ENCODE measurements at regions of chr10 and their contacts with region 1.

Region 1: GRCh38 chr10:69092959-69093850 is 5.3 kb downstream of the SRGN start:
- DNase-seq: peak; percentile 87 to 92 (median 88)
- H3K4me3 ChIP-seq: no peak overlapping the region
- H3K4me3 Mint-ChIP-seq: peak overlapping the region; percentile 18 to 76 (median 52)
- H3K27ac ChIP-seq: peak overlapping the region; percentile 64
- H3K27ac Mint-ChIP-seq: peak overlapping the region; percentile 87 to 98 (median 93)
- H3K4me1 ChIP-seq: peaks cover 56% of the 10 kb centered on the region
- H3K4me1 Mint-ChIP-seq: peaks cover 38 to 69% (median 51%) of the 10 kb centered on the region in 4 donors
- H3K27me3 ChIP-seq: no peaks in the 10 kb centered on the region
- H3K27me3 Mint-ChIP-seq: peaks cover 0 to 1% of the 10 kb centered on the region in 2 donors

Region 2: GRCh38 chr10:68955832-68956532 is 137.2 kb before region 1 on chr10 and contains the start of gene DDX21:
- CTCF ChIA-PET with region 1: interaction called, 53 read pairs
- POLR2A ChIA-PET with region 1: interaction called, 21 read pairs
- intact Hi-C with region 1: loop called (anchors 1 kb)
- DNase-seq: peak; percentile 87 to 96 (median 90)
- H3K4me3 ChIP-seq: peak within 1 kb of the TSS; percentile 64 to 97
- H3K4me3 Mint-ChIP-seq: peak within 1 kb of the TSS; percentile 97 to 100 (median 100)
- H3K27ac ChIP-seq: peak within 1 kb of the TSS; percentile 100
- H3K27ac Mint-ChIP-seq: peak within 1 kb of the TSS; percentile 98 to 100 (median 100)
- H3K4me1 ChIP-seq: peaks cover 46% of the 10 kb centered on the region
- H3K4me1 Mint-ChIP-seq: peaks cover 16 to 47% (median 35%) of the 10 kb centered on the region in 4 donors
- H3K27me3 ChIP-seq: no peaks in the 10 kb centered on the region
- H3K27me3 Mint-ChIP-seq: no peaks in the 10 kb centered on the region
- total RNA-seq, gene DDX21: 50.6 to 57.1 TPM

Region 3: GRCh38 chr10:68988530-68989316 is 104.5 kb before region 1 on chr10 and contains the start of gene KIFBP:
- CTCF ChIA-PET with region 1: interaction called, 27 read pairs
- POLR2A ChIA-PET with region 1: interaction called, 16 read pairs
- intact Hi-C with region 1: loop called (anchors 1 kb)
- DNase-seq: peak; percentile 82 to 90 (median 84)
- H3K4me3 ChIP-seq: peak within 1 kb of the TSS; percentile 79 to 99
- H3K4me3 Mint-ChIP-seq: peak within 1 kb of the TSS; percentile 92 to 100 (median 99)
- H3K27ac ChIP-seq: peak within 1 kb of the TSS; percentile 71
- H3K27ac Mint-ChIP-seq: peak within 1 kb of the TSS; percentile 86 to 99 (median 98)
- H3K4me1 ChIP-seq: peaks cover 49% of the 10 kb centered on the region
- H3K4me1 Mint-ChIP-seq: peaks cover 36 to 63% (median 53%) of the 10 kb centered on the region in 4 donors
- H3K27me3 ChIP-seq: no peaks in the 10 kb centered on the region
- H3K27me3 Mint-ChIP-seq: no peaks in the 10 kb centered on the region
- total RNA-seq, gene KIFBP: 17.9 to 18.5 TPM

Region 4: DNA sequence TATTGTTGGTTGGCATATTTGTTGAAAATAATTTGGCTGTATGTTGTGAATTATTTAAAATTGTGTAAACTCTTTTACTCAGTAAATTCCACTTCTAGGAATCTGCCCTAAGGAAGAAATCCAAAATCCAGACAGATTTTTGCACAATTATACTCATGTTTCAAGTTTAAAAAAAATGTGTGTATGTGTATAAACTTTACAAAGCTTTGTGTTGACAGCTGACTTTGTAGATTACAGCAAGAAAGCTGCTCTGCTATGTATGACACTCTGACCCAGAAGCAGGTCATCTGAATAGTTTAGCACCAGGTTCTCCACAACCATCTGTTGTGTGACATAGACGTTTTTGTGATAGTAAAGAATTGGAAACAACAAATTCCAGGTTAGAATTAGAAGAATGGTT is 83.0 kb before region 1 on chr10:
- CTCF ChIA-PET with region 1: interaction called, 228 read pairs
- POLR2A ChIA-PET with region 1: interaction called, 56 read pairs
- intact Hi-C with region 1: loop called (anchors 1 kb)
- DNase-seq: no peak
- H3K4me3 ChIP-seq: no peak overlapping the region
- H3K4me3 Mint-ChIP-seq: no peak overlapping the region
- H3K27ac ChIP-seq: no peak overlapping the region
- H3K27ac Mint-ChIP-seq: no peak overlapping the region
- H3K4me1 ChIP-seq: no peaks in the 10 kb centered on the region
- H3K4me1 Mint-ChIP-seq: peaks cover 0 to 1% (median 0%) of the 10 kb centered on the region in 4 donors
- H3K27me3 ChIP-seq: no peaks in the 10 kb centered on the region
- H3K27me3 Mint-ChIP-seq: no peaks in the 10 kb centered on the region

Region 5: GRCh38 chr10:69061305-69062161 is 31.7 kb before region 1 on chr10:
- CTCF ChIA-PET with region 1: interaction called, 11 read pairs
- POLR2A ChIA-PET with region 1: interaction called, 24 read pairs
- intact Hi-C with region 1: loop called (anchors 2 kb)
- DNase-seq: peak in 4 of 5 donors; percentile 39 to 48 (median 44)
- H3K4me3 ChIP-seq: peak overlapping the region; percentile 12 to 21
- H3K4me3 Mint-ChIP-seq: peak overlapping the region; percentile 79 to 93 (median 85)
- H3K27ac ChIP-seq: peak overlapping the region; percentile 18
- H3K27ac Mint-ChIP-seq: peak overlapping the region; percentile 85 to 94 (median 87)
- H3K4me1 ChIP-seq: peaks cover 36% of the 10 kb centered on the region
- H3K4me1 Mint-ChIP-seq: peaks cover 27 to 47% (median 34%) of the 10 kb centered on the region in 4 donors
- H3K27me3 ChIP-seq: no peaks in the 10 kb centered on the region
- H3K27me3 Mint-ChIP-seq: no peaks in the 10 kb centered on the region

Region 6: DNA sequence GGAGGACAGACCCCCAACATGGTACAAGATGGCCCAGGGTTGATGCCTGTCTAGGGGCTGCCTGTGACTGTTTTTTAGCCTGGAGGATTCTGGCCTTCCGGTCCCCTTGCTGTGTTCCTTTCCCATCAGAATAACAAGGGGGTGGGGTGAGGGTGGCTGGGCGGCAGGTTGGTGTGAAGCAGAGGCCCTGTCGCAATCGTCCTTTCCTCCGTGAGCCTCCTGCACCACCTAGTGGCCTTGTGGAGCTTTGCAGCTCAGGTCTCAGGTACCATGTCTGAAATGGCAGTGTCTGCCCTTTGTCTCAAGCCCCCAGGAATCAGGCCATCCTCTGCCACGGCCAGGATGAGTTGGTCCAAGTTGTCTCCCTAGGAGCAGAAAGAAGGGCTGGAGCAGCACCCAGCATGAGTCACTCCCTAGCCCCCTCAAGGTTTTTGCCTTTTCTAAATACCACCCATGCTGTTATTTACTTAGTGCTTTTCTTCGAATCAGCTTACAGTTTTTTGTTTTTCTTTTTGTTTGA is 299.3 kb after region 1 on chr10:
- CTCF ChIA-PET with region 1: interaction called, 6 read pairs
- POLR2A ChIA-PET with region 1: no interaction called
- intact Hi-C with region 1: loop called (anchors 2 kb)
- DNase-seq: peak; percentile 79 to 81 (median 80)
- H3K4me3 ChIP-seq: no peak overlapping the region
- H3K4me3 Mint-ChIP-seq: no peak overlapping the region
- H3K27ac ChIP-seq: peak overlapping the region; percentile 22
- H3K27ac Mint-ChIP-seq: peak overlapping the region; percentile 41 to 91 (median 79)
- H3K4me1 ChIP-seq: peaks cover 15% of the 10 kb centered on the region
- H3K4me1 Mint-ChIP-seq: peaks cover 7 to 17% (median 11%) of the 10 kb centered on the region in 4 donors
- H3K27me3 ChIP-seq: no peaks in the 10 kb centered on the region
- H3K27me3 Mint-ChIP-seq: no peaks in the 10 kb centered on the region

Measured in CD4-positive, alpha-beta memory T cell (primary cell).